H1 (cell line): ENCODE measurements at regions of chr7 and their contacts with region 1.

Region 1: DNA sequence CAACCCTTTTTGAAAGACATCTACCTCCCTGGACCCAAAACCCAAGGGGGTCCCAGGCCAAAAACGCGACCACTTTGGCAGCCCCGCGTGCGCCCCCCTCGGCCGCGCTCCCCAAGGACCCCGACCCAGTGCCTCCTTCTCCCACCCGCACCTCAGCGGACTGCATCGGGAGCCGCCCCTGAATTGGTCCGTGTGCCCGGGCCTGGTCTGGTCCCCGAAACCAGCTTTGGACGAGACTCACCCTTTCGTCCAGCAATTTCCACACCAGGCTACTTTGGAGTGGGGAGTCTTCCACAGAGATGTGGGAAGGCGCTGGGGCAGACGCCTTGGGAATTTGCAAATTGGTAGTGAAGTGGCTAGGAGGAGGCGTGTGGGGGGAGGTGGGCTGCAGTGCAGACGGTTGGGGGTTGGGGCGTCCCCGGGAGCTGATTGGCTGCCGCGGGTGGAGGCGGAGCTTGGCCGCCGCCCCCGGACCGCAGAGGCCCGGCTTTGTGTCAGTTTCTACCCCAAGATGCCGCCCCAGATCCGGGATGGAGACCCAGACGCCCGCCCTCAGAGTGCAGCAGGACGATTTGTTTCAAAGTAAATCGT is 16.9 kb downstream of the TCAF1 start:
- DNase-seq: peak in 1 of 2 experiments; percentile 88
- H3K4me3 ChIP-seq: peak overlapping the region; percentile 75 to 93 (median 86)
- H3K27ac ChIP-seq: peak overlapping the region; percentile 55; the same call in 1 of the 2 replicates
- H3K4me1 ChIP-seq: peaks cover 0 to 8% (median 2%) of the 10 kb centered on the region in 4 experiments; a peak in 3 of 7 replicates
- H3K27me3 ChIP-seq: no peaks in the 10 kb centered on the region; a peak in 1 of 7 replicates
- CTCF ChIP-seq: peak in 1 of 3 experiments; percentile 10; a peak in 1 of 4 replicates
- EP300 ChIP-seq: no peak
- POLR2A ChIP-seq: peak; percentile 15 to 68; a peak in 2 of 3 replicates
- RAD21 ChIP-seq: no peak

Region 2: GRCh38 chr7:143901668-143902331 is 16.7 kb after region 1 on chr7 and contains the start of gene TCAF1:
- CTCF ChIA-PET with region 1: interaction called, 13 read pairs
- POLR2A ChIA-PET with region 1: interaction called, 73 read pairs
- DNase-seq: peak; percentile 88 to 90
- H3K4me3 ChIP-seq: peak within 1 kb of the TSS; percentile 77 to 89 (median 86)
- H3K27ac ChIP-seq: peak within 1 kb of the TSS; percentile 82
- H3K4me1 ChIP-seq: peaks cover 11 to 37% (median 24%) of the 10 kb centered on the region in 4 experiments
- H3K27me3 ChIP-seq: no peaks in the 10 kb centered on the region
- CTCF ChIP-seq: peak in 2 of 3 experiments; percentile 9 to 32; a peak in 2 of 4 replicates
- EP300 ChIP-seq: no peak
- POLR2A ChIP-seq: peak; percentile 67 to 90
- RAD21 ChIP-seq: no peak; a peak in 1 of 4 replicates
- total RNA-seq, gene TCAF1: 28.0 and 30.7 TPM in 2 replicates

Region 3: DNA sequence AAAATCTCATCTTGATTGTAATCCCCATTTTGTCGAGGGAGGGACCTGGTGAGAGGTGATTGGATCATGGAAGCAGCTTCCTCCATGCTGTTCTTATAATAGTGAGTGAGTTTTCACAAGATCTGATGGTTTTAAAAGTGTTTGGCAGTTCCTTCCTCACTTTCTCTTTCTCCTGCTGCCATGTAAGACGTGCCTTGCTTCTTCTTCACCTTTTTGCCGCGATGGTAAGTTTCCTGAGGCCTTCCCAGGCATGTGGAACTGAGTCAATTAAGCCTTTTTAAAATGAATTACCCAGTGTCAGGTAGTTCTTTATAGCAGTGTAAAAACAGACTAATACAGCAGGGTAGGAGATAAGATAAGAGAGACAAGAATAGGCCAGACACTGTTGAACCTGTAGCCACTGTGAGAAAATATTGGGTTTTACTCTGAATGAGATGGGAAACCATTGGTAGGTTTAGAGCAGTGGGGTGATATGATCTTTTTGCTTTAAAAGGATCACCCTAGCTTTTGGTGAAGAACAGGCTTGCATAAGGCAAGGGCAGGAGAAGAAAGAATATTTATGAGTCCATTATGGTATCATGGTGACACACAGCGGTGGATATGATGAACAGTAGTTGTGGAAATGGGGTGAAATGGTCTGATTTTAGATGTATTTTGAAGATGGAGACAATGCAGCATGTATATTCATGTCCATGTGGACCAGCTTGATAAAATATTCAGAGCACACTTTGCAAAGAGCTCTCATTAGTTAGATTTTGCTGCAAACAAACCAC is 126.6 kb after region 1 on chr7:
- CTCF ChIA-PET with region 1: no interaction called
- POLR2A ChIA-PET with region 1: no interaction called
- DNase-seq: no peak
- H3K4me3 ChIP-seq: no peak overlapping the region
- H3K27ac ChIP-seq: no peak overlapping the region
- H3K4me1 ChIP-seq: no peaks in the 10 kb centered on the region
- H3K27me3 ChIP-seq: no peaks in the 10 kb centered on the region
- CTCF ChIP-seq: no peak
- EP300 ChIP-seq: no peak
- POLR2A ChIP-seq: no peak
- RAD21 ChIP-seq: no peak